GM12878 (cell line): ENCODE measurements at regions of chr3 and their contacts with region 1.

Region 1: GRCh38 chr3:150721285-150722130 is 17.8 kb upstream of the ERICH6 start:
- DNase-seq: no peak
- ATAC-seq: peak; percentile 93
- H3K4me3 ChIP-seq: no peak overlapping the region
- H3K27ac ChIP-seq: no peak overlapping the region
- H3K4me1 ChIP-seq: no peaks in the 10 kb centered on the region
- H3K27me3 ChIP-seq: no peaks in the 10 kb centered on the region
- CTCF ChIP-seq: peak; percentile 70 to 82 (median 79); a peak in 5 of 6 replicates
- EP300 ChIP-seq: no peak
- POLR2A ChIP-seq: no peak
- RAD21 ChIP-seq: peak; percentile 100

Region 2: GRCh38 chr3:150528354-150528797 is 193.1 kb before region 1 on chr3:
- CTCF ChIA-PET with region 1: interaction called, 21 read pairs
- POLR2A ChIA-PET with region 1: no interaction called
- RAD21 ChIA-PET with region 1: interaction called, 16 read pairs
- SMC1A ChIA-PET with region 1: interaction called, 22 read pairs
- in situ Hi-C with region 1: no loop called
- intact Hi-C with region 1: loop called (anchors 2 kb)
- DNase-seq: no peak
- ATAC-seq: peak; percentile 54
- H3K4me3 ChIP-seq: no peak overlapping the region
- H3K27ac ChIP-seq: no peak overlapping the region
- H3K4me1 ChIP-seq: no peaks in the 10 kb centered on the region
- H3K27me3 ChIP-seq: no peaks in the 10 kb centered on the region
- CTCF ChIP-seq: peak; percentile 13 to 48 (median 33); a peak in 4 of 6 replicates
- EP300 ChIP-seq: no peak
- POLR2A ChIP-seq: no peak
- RAD21 ChIP-seq: peak; percentile 48

Region 3: GRCh38 chr3:150710097-150710496 is 11.4 kb before region 1 on chr3:
- CTCF ChIA-PET with region 1: interaction called, 10 read pairs
- POLR2A ChIA-PET with region 1: no interaction called
- RAD21 ChIA-PET with region 1: no interaction called
- SMC1A ChIA-PET with region 1: interaction called, 10 read pairs
- in situ Hi-C with region 1: no loop called
- intact Hi-C with region 1: no loop called
- DNase-seq: no peak
- ATAC-seq: no peak
- H3K4me3 ChIP-seq: no peak overlapping the region
- H3K27ac ChIP-seq: no peak overlapping the region
- H3K4me1 ChIP-seq: no peaks in the 10 kb centered on the region
- H3K27me3 ChIP-seq: no peaks in the 10 kb centered on the region
- CTCF ChIP-seq: no peak
- EP300 ChIP-seq: no peak
- POLR2A ChIP-seq: no peak
- RAD21 ChIP-seq: no peak

Region 4: GRCh38 chr3:150793609-150794008 is 72.1 kb after region 1 on chr3:
- CTCF ChIA-PET with region 1: interaction called, 40 read pairs
- POLR2A ChIA-PET with region 1: interaction called, 3 read pairs
- RAD21 ChIA-PET with region 1: interaction called, 4 read pairs
- SMC1A ChIA-PET with region 1: interaction called, 33 read pairs
- in situ Hi-C with region 1: no loop called
- intact Hi-C with region 1: no loop called
- DNase-seq: no peak
- ATAC-seq: peak; percentile 54
- H3K4me3 ChIP-seq: no peak overlapping the region
- H3K27ac ChIP-seq: no peak overlapping the region
- H3K4me1 ChIP-seq: no peaks in the 10 kb centered on the region; the same call in 1 of the 2 replicates
- H3K27me3 ChIP-seq: peaks cover 0 to 4% of the 10 kb centered on the region in 2 experiments; a peak in 3 of 4 replicates
- CTCF ChIP-seq: peak in 1 of 3 experiments; percentile 26; a peak in 1 of 6 replicates
- EP300 ChIP-seq: no peak
- POLR2A ChIP-seq: no peak
- RAD21 ChIP-seq: no peak

Region 5: GRCh38 chr3:150870396-150870795 is 148.9 kb after region 1 on chr3:
- CTCF ChIA-PET with region 1: interaction called, 29 read pairs
- POLR2A ChIA-PET with region 1: no interaction called
- RAD21 ChIA-PET with region 1: interaction called, 23 read pairs
- SMC1A ChIA-PET with region 1: no interaction called
- in situ Hi-C with region 1: loop called (anchors 5 kb)
- intact Hi-C with region 1: loop called (anchors 1 kb)
- DNase-seq: no peak
- ATAC-seq: no peak
- H3K4me3 ChIP-seq: no peak overlapping the region
- H3K27ac ChIP-seq: no peak overlapping the region
- H3K4me1 ChIP-seq: no peaks in the 10 kb centered on the region
- H3K27me3 ChIP-seq: no peaks in the 10 kb centered on the region
- CTCF ChIP-seq: no peak
- EP300 ChIP-seq: no peak
- POLR2A ChIP-seq: no peak
- RAD21 ChIP-seq: no peak